ENCODE measurements at regions of chr20 and their contacts with region 1.

Region 1: GRCh38 chr20:39066471-39067242 is 104.5 kb downstream of the DHX35 start:
- DNase-seq: no peak
- ATAC-seq: no peak

Region 2: GRCh38 chr20:38919683-38920082 is 147.0 kb before region 1 on chr20:
- intact Hi-C with region 1: loop called in 1 of 2 experiments (anchors 10 kb)
- DNase-seq: no peak
- ATAC-seq: no peak

Region 3: DNA sequence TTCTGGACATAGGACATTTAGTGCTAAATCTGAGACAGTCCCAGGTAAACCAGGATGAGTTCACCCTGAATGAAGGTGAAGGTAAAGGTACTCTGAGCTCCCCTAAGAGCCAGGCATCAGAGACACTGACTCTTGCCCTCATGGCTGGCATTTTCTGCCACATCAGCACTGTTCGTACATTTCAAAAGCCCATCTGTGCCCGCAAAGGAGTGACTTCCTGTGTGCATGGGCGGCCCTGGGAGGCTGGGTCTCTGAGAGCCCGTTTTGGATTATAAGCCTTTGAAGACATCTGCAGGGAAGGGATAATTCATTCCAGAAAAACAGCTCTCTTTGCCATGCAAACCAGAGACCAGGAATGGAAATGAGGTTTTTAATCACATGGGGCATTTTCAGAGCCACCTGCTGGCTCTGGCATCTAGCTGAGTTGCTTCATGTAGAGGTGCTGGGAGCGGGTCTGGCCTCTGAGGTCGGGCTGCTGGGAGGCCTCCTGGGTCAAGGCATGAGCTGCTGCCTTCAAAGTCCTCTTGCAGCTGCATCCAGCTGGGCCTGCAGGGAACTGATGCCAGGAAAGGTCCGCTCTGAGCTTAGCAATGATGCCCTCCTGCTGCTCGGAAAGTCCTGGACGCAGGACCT is 243.8 kb after region 1 on chr20:
- intact Hi-C with region 1: no loop called
- DNase-seq: no peak
- ATAC-seq: no peak